ENCODE measurements at regions of chr17 and their contacts with region 1.

Region 1: DNA sequence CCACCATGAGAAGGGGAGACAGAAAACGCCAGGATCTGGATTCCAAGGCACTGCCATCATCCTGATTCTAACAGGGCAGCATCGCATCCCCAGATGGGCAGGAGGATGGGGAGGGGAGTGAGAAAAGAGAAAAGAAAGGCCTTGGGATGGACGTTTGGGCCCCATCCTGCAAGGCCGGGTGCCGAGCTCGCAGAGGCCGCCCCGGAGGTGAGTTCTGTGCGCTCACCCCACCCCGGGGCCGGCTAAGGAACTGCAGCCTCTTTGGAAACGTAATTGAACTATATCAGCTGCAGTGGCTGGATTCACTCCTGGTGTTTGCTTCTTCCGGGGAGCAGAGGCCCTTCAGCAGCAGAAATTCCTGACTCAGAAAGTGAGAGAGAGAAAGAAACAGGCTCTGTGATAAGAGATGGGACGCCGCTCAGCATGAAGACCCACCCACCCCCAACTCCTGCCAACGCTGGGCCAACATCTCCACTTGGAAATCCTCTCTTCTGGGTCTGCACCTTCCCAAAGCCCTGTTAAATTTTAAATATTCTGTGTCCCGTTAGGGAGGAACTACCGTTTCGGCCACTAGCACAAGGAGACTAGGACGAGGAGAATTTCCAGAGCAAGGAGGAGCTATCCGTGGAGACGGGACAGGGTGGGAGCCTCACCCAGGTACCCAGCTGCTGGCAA is 8.5 kb upstream of the SSTR2 start:
- DNase-seq: peak; percentile 85
- ATAC-seq: peak; percentile 95
- H3K4me3 Mint-ChIP-seq: no peak overlapping the region
- H3K27ac Mint-ChIP-seq: no peak overlapping the region
- H3K4me1 Mint-ChIP-seq: peaks cover 40% of the 10 kb centered on the region
- H3K27me3 Mint-ChIP-seq: no peaks in the 10 kb centered on the region
- CTCF ChIP-seq: peak; percentile 58

Region 2: DNA sequence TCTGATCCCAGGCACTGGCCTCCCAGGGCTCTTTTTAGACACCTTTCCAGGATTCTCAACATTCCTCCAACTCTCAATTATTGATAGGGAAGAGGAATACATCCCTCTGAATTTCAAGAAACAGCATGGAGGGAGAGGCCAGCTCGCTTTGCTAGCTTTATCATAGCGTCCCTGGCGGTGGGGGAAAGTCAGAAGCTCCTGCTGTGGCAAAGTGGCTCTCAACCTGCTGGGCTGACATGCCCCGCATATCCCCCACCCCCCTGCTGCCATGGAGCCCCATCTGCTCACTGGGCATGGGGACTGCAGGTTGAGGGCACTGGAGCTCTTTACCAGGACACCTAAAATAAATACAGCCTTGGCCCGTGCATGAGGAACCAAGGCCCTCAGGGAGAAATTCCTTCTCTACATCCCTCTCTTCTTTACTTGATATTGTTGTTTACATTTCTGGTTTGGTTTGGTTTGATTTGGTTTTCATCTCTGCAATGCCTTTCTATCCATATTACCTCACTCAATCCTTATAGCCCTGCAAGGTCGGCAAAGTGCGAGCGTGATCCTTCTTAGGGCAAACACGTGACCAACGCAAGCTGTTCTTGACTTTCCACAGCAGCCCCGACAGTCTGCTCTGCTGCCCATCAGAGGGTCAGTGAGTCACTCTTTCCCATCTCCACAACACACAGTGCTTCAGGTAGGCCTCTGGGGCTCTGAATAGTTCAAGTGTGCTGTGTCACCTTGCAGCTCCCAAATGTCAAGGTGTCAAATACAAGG is 203.9 kb before region 1 on chr17:
- CTCF ChIA-PET with region 1: interaction called, 10 read pairs
- POLR2A ChIA-PET with region 1: no interaction called
- DNase-seq: peak; percentile 21
- ATAC-seq: peak; percentile 73
- H3K4me3 Mint-ChIP-seq: no peak overlapping the region
- H3K27ac Mint-ChIP-seq: peak overlapping the region; percentile 37
- H3K4me1 Mint-ChIP-seq: peaks cover 31% of the 10 kb centered on the region
- H3K27me3 Mint-ChIP-seq: no peaks in the 10 kb centered on the region
- CTCF ChIP-seq: no peak

Region 3: GRCh38 chr17:72970246-72970645 is 186.1 kb before region 1 on chr17:
- CTCF ChIA-PET with region 1: interaction called, 13 read pairs
- POLR2A ChIA-PET with region 1: no interaction called
- DNase-seq: no peak
- ATAC-seq: no peak
- H3K4me3 Mint-ChIP-seq: no peak overlapping the region
- H3K27ac Mint-ChIP-seq: no peak overlapping the region; the same call in 1 of the 2 replicates
- H3K4me1 Mint-ChIP-seq: peaks cover 32% of the 10 kb centered on the region
- H3K27me3 Mint-ChIP-seq: no peaks in the 10 kb centered on the region
- CTCF ChIP-seq: no peak

Region 4: GRCh38 chr17:73092523-73093135 is 63.7 kb before region 1 on chr17 and contains the start of gene SLC39A11:
- CTCF ChIA-PET with region 1: interaction called, 13 read pairs
- POLR2A ChIA-PET with region 1: no interaction called
- DNase-seq: peak; percentile 93
- ATAC-seq: peak; percentile 93
- H3K4me3 Mint-ChIP-seq: peak within 1 kb of the TSS; percentile 98
- H3K27ac Mint-ChIP-seq: peak within 1 kb of the TSS; percentile 95
- H3K4me1 Mint-ChIP-seq: peaks cover 23% of the 10 kb centered on the region
- H3K27me3 Mint-ChIP-seq: no peaks in the 10 kb centered on the region; the same call in 1 of the 2 replicates
- CTCF ChIP-seq: no peak
- total RNA-seq, gene SLC39A11: 18.9 to 25.5 TPM (median 22.3 TPM) in 3 replicates

Region 5: GRCh38 chr17:73132085-73132492 is 24.2 kb before region 1 on chr17:
- CTCF ChIA-PET with region 1: interaction called, 12 read pairs
- POLR2A ChIA-PET with region 1: no interaction called
- DNase-seq: no peak
- ATAC-seq: peak; percentile 57
- H3K4me3 Mint-ChIP-seq: no peak overlapping the region; the same call in 1 of the 2 replicates
- H3K27ac Mint-ChIP-seq: no peak overlapping the region
- H3K4me1 Mint-ChIP-seq: peaks cover 33% of the 10 kb centered on the region
- H3K27me3 Mint-ChIP-seq: no peaks in the 10 kb centered on the region
- CTCF ChIP-seq: no peak